ENCODE measurements at regions of chr15 and their contacts with region 1.

Region 1: GRCh38 chr15:64387562-64388168 is at the start of gene TRIP4:
- DNase-seq: peak; percentile 94
- H3K4me3 Mint-ChIP-seq: peak within 1 kb of the TSS; percentile 100
- H3K27ac Mint-ChIP-seq: peak within 1 kb of the TSS; percentile 94
- H3K4me1 Mint-ChIP-seq: peaks cover 16% of the 10 kb centered on the region
- H3K27me3 Mint-ChIP-seq: no peaks in the 10 kb centered on the region
- CTCF ChIP-seq: no peak
- total RNA-seq, gene TRIP4: 19.8 and 26.0 TPM in 2 replicates

Region 2: DNA sequence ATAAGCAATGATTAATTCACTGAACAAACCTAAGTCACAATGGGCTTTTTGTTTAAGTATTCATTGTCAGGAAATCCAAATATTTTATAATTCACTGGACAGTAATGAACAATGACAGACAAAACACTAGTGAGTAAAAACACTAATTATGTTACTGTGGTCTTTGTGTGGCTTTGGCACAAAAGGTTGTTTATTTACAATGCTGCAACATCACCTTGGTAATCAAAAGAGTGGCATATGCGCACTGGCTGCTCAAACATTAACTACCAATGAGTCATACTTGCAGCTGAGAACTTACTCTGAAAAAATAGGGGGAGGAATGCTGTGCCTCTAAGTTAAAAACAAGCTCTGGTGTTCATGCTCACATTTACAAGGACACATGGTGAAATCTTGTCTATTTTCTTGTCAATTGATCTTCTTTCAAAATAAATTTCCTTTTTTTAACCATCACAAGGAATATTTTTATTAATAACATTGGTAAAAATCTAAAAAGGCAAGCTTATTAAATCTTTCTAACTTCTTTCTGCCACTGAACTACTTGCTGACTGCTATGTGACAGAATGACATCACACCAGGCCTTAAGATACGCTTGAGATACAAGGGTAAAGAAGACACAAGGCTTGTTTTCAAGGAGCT is 139.6 kb before region 1 on chr15:
- CTCF ChIA-PET with region 1: no interaction called
- POLR2A ChIA-PET with region 1: interaction called, 13 read pairs
- intact Hi-C with region 1: no loop called
- DNase-seq: peak; percentile 80
- H3K4me3 Mint-ChIP-seq: no peak overlapping the region
- H3K27ac Mint-ChIP-seq: peak overlapping the region; percentile 96
- H3K4me1 Mint-ChIP-seq: peaks cover 32% of the 10 kb centered on the region
- H3K27me3 Mint-ChIP-seq: no peaks in the 10 kb centered on the region
- CTCF ChIP-seq: no peak

Region 3: DNA sequence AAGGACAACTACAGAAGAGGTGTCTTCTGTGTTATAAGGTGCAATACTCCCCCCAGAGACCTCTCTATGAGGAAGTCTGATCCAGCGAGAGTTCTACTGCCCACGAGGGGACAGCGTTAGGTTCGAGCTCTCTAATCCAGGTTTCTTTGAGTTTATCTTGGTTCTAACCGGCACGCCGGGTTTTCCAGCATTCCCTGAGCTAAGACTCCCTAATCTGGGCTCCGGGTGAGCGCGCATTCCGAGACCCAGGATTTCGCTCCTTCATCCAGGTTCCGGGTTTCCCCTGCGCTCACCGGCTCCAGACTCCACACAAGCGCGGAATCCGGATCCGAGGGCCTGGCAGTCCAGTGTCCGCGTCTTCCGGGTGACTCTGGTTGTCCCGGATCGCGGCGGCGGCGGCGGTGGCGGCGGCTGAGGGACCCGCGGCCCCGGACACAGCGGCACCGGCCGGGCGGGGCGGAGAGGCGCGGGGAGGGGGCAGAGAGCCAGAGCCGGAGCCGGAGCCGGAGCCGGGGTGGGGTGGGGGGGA is 72.6 kb after region 1 on chr15 and contains the start of gene ZNF609:
- CTCF ChIA-PET with region 1: no interaction called
- POLR2A ChIA-PET with region 1: interaction called, 16 read pairs
- intact Hi-C with region 1: no loop called
- DNase-seq: peak; percentile 96
- H3K4me3 Mint-ChIP-seq: peak within 1 kb of the TSS; percentile 84
- H3K27ac Mint-ChIP-seq: peak within 1 kb of the TSS; percentile 78
- H3K4me1 Mint-ChIP-seq: peaks cover 32% of the 10 kb centered on the region
- H3K27me3 Mint-ChIP-seq: no peaks in the 10 kb centered on the region
- CTCF ChIP-seq: no peak
- total RNA-seq, gene ZNF609: 45.0 and 49.0 TPM in 2 replicates

Region 4: DNA sequence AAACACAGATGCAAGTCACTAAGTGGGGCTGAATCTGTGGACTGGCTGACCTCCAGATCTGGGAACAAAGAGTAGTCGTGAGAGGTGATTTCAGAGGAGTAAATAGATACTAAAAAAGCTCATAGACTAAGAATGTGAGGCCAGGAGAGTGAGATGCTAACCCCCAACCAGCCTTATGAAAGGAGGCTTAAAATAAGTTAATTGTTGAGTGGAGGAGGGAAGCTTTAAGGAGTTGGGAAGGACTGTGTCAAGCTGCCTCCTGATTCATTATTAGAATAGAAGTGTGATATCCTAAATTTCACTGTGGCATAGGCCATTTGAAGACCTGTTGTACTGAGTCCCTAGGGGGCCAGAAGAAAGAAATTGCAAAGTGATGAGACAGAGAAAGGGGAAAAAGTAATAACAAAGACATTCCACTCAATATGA is 280.1 kb after region 1 on chr15:
- CTCF ChIA-PET with region 1: no interaction called
- POLR2A ChIA-PET with region 1: no interaction called
- intact Hi-C with region 1: no loop called
- DNase-seq: no peak
- H3K4me3 Mint-ChIP-seq: no peak overlapping the region
- H3K27ac Mint-ChIP-seq: peak overlapping the region; percentile 50
- H3K4me1 Mint-ChIP-seq: peaks cover 6% of the 10 kb centered on the region
- H3K27me3 Mint-ChIP-seq: no peaks in the 10 kb centered on the region
- CTCF ChIP-seq: no peak